Activated CD8-positive, alpha-beta memory T cell treated with anti-CD3 and anti-CD28 coated beads, Interleukin-2, amount 10 ng/mL, durations not matched to agents 7 days and 5 days (primary cell): ENCODE measurements at regions of chr12 and their contacts with region 1.

Region 1: GRCh38 chr12:111451649-111452129 is 46.0 kb downstream of the SH2B3 start:
- DNase-seq: no peak
- ATAC-seq: peak; percentile 50
- H3K4me3 Mint-ChIP-seq: no peak overlapping the region
- H3K27ac Mint-ChIP-seq: no peak overlapping the region
- H3K4me1 Mint-ChIP-seq: peaks cover 45% of the 10 kb centered on the region
- H3K27me3 Mint-ChIP-seq: no peaks in the 10 kb centered on the region

Region 2: GRCh38 chr12:111377440-111377839 is 74.2 kb before region 1 on chr12:
- CTCF ChIA-PET with region 1: no interaction called
- DNase-seq: no peak
- ATAC-seq: no peak
- H3K4me3 Mint-ChIP-seq: no peak overlapping the region
- H3K27ac Mint-ChIP-seq: no peak overlapping the region
- H3K4me1 Mint-ChIP-seq: no peaks in the 10 kb centered on the region
- H3K27me3 Mint-ChIP-seq: peaks cover 12% of the 10 kb centered on the region

Region 3: DNA sequence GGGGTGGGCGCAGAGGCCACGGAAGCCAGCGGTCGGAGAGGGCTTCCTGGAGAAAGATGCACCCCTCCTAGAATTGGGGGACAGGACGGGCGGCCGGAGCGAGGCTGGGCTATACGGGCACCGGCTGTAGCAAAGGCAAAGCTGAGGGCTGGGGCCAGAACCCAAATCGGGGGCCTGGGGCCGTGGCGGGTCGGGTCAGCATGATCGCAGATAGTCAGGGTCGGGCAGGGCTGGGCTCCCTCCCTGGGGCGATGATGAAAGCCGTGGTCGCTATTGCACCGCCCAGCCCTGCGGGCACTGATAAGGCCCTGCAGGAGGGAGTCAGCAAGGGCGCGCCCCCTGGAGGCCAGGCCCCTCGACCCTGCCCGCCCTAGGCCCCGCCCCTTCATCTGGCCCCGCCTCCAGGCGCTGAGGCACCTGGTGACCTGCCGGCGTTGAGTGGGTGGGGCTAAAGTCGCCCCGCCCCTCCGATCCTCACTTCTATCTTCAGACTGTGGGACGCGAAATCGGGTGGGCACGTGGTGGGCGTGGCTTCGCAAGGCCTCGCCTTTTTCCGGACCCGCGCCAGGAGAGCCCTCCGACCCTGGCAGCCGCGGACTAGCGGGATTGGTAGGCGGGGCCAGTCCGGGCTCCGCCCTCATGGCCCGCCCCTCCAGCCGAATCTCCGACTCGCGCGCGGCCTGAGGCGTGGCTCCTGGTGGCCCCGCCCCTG is 46.4 kb before region 1 on chr12:
- CTCF ChIA-PET with region 1: interaction called, 950 read pairs
- DNase-seq: peak; percentile 99
- ATAC-seq: peak; percentile 77
- H3K4me3 Mint-ChIP-seq: peak overlapping the region; percentile 70
- H3K27ac Mint-ChIP-seq: peak overlapping the region; percentile 89
- H3K4me1 Mint-ChIP-seq: peaks cover 57% of the 10 kb centered on the region
- H3K27me3 Mint-ChIP-seq: peaks cover 20% of the 10 kb centered on the region

Region 4: GRCh38 chr12:111434680-111435338 is 16.9 kb before region 1 on chr12:
- CTCF ChIA-PET with region 1: interaction called, 44 read pairs
- DNase-seq: peak; percentile 91
- ATAC-seq: peak; percentile 68
- H3K4me3 Mint-ChIP-seq: peak overlapping the region; percentile 63
- H3K27ac Mint-ChIP-seq: peak overlapping the region; percentile 95
- H3K4me1 Mint-ChIP-seq: peaks cover 89% of the 10 kb centered on the region
- H3K27me3 Mint-ChIP-seq: no peaks in the 10 kb centered on the region

Region 5: DNA sequence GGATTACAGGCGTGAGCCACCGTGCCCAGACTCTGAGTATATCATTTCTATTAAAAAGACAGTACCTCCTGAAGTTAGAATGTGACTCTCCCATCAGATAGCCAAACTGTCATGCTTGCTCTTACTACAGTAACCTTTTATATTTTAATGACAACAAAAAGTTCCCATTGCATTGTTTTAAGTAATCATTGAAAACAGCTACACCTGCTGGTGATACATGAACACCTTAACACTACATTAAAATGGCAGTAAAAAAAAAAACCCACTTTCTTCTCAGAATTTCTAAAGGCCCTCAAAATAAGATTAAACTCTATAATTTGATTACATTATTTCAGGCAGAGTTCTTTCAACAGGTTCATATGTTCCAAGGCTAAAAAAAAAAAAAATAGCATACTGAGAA is 30.8 kb after region 1 on chr12:
- CTCF ChIA-PET with region 1: interaction called, 13 read pairs
- DNase-seq: no peak
- ATAC-seq: no peak
- H3K4me3 Mint-ChIP-seq: no peak overlapping the region
- H3K27ac Mint-ChIP-seq: no peak overlapping the region
- H3K4me1 Mint-ChIP-seq: no peaks in the 10 kb centered on the region
- H3K27me3 Mint-ChIP-seq: no peaks in the 10 kb centered on the region

Region 6: GRCh38 chr12:111812881-111813741 is 361.4 kb after region 1 on chr12:
- CTCF ChIA-PET with region 1: interaction called, 11 read pairs
- DNase-seq: peak; percentile 79
- ATAC-seq: peak; percentile 95
- H3K4me3 Mint-ChIP-seq: no peak overlapping the region
- H3K27ac Mint-ChIP-seq: no peak overlapping the region
- H3K4me1 Mint-ChIP-seq: peaks cover 8% of the 10 kb centered on the region
- H3K27me3 Mint-ChIP-seq: peaks cover 3% of the 10 kb centered on the region